ENCODE measurements at regions of chr21 and their contacts with region 1.

Region 1: GRCh38 chr21:17512253-17513213 is at the start of gene CXADR:
- DNase-seq: peak; percentile 89
- ATAC-seq: peak; percentile 88
- H3K4me3 ChIP-seq: peak within 1 kb of the TSS; percentile 85 to 96 (median 92)
- H3K27ac ChIP-seq: peak within 1 kb of the TSS; percentile 90
- H3K4me1 ChIP-seq: peaks cover 52% of the 10 kb centered on the region
- H3K27me3 ChIP-seq: no peaks in the 10 kb centered on the region; a peak in 1 of 5 replicates
- CTCF ChIP-seq: peak; percentile 81
- EP300 ChIP-seq: peak in 1 of 2 experiments; percentile 29; a peak in 1 of 4 replicates
- POLR2A ChIP-seq: peak; percentile 91 to 96
- RAD21 ChIP-seq: peak; percentile 78
- total RNA-seq, gene CXADR: 57.0 and 86.8 TPM in 2 replicates

Region 2: GRCh38 chr21:17343055-17343454 is 169.5 kb before region 1 on chr21:
- CTCF ChIA-PET with region 1: no interaction called
- POLR2A ChIA-PET with region 1: no interaction called
- in situ Hi-C with region 1: no loop called
- intact Hi-C with region 1: no loop called
- DNase-seq: peak; percentile 32
- ATAC-seq: no peak
- H3K4me3 ChIP-seq: no peak overlapping the region
- H3K27ac ChIP-seq: no peak overlapping the region
- H3K4me1 ChIP-seq: peaks cover 5% of the 10 kb centered on the region; the same call in 1 of the 2 replicates
- H3K27me3 ChIP-seq: no peaks in the 10 kb centered on the region; a peak in 1 of 5 replicates
- CTCF ChIP-seq: no peak
- EP300 ChIP-seq: no peak
- POLR2A ChIP-seq: no peak
- RAD21 ChIP-seq: no peak

Region 3: GRCh38 chr21:17387030-17387617 is 125.4 kb before region 1 on chr21:
- CTCF ChIA-PET with region 1: no interaction called
- POLR2A ChIA-PET with region 1: no interaction called
- in situ Hi-C with region 1: no loop called
- intact Hi-C with region 1: loop called (anchors 1 kb)
- DNase-seq: peak; percentile 75
- ATAC-seq: peak; percentile 74
- H3K4me3 ChIP-seq: no peak overlapping the region
- H3K27ac ChIP-seq: no peak overlapping the region
- H3K4me1 ChIP-seq: 0 out of 2 replicates have a peak, but pooled peaks cover 12% of the 10 kb centered on the region
- H3K27me3 ChIP-seq: no peaks in the 10 kb centered on the region
- CTCF ChIP-seq: peak; percentile 74
- EP300 ChIP-seq: no peak
- POLR2A ChIP-seq: no peak
- RAD21 ChIP-seq: peak; percentile 84

Region 4: GRCh38 chr21:17461014-17461413 is 51.5 kb before region 1 on chr21:
- CTCF ChIA-PET with region 1: no interaction called
- POLR2A ChIA-PET with region 1: interaction called, 18 read pairs
- in situ Hi-C with region 1: no loop called
- intact Hi-C with region 1: loop called (anchors 1 kb)
- DNase-seq: no peak
- ATAC-seq: no peak
- H3K4me3 ChIP-seq: no peak overlapping the region
- H3K27ac ChIP-seq: peak overlapping the region; percentile 80
- H3K4me1 ChIP-seq: peaks cover 45% of the 10 kb centered on the region
- H3K27me3 ChIP-seq: no peaks in the 10 kb centered on the region
- CTCF ChIP-seq: no peak
- EP300 ChIP-seq: no peak
- POLR2A ChIP-seq: no peak
- RAD21 ChIP-seq: no peak

Region 5: DNA sequence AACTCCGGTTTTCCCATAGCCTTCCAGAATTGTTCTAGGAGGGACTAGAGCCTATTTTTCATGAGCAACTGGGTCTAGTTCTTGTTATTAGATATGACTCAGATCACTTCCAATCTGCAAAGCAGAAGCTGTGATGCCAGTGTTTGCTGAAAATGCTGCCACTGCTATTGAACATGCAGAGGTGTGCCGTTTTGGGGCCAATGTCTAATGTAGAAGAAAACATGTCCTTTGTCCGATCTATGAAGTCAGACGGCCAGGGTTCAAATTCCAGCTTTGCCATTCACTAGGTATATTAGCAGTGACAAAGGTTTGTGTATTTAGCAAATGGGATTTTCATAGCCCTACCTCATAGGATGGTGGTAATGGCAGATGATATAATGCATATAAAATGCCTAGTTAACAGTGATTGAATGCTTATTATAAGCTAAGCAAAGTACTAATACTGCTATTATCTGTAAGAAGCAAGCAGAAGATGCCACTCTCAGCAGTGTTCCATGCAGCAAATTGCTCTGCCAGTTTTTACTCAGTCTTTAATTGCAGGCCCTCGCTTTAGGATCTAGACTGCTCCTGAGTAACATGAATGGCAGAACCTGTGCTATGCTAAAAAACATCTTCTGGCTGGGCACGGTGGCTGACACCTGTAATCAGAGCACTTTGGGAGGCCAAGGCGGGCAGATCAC is 39.8 kb before region 1 on chr21:
- CTCF ChIA-PET with region 1: no interaction called
- POLR2A ChIA-PET with region 1: interaction called, 20 read pairs
- in situ Hi-C with region 1: no loop called
- intact Hi-C with region 1: loop called (anchors 1 kb)
- DNase-seq: peak; percentile 99
- ATAC-seq: peak; percentile 92
- H3K4me3 ChIP-seq: peak overlapping the region in 1 of 3 experiments; percentile 37; a peak in 1 of 6 replicates
- H3K27ac ChIP-seq: peak overlapping the region; percentile 94
- H3K4me1 ChIP-seq: peaks cover 85% of the 10 kb centered on the region
- H3K27me3 ChIP-seq: no peaks in the 10 kb centered on the region
- CTCF ChIP-seq: no peak
- EP300 ChIP-seq: peak; percentile 88 to 94
- POLR2A ChIP-seq: no peak
- RAD21 ChIP-seq: no peak

Region 6: GRCh38 chr21:17527240-17527639 is 14.7 kb after region 1 on chr21:
- CTCF ChIA-PET with region 1: no interaction called
- POLR2A ChIA-PET with region 1: interaction called, 59 read pairs
- in situ Hi-C with region 1: no loop called
- intact Hi-C with region 1: loop called (anchors 1 kb)
- DNase-seq: peak; percentile 83
- ATAC-seq: peak; percentile 36
- H3K4me3 ChIP-seq: no peak overlapping the region
- H3K27ac ChIP-seq: peak overlapping the region; percentile 58
- H3K4me1 ChIP-seq: peaks cover 98% of the 10 kb centered on the region
- H3K27me3 ChIP-seq: no peaks in the 10 kb centered on the region
- CTCF ChIP-seq: no peak
- EP300 ChIP-seq: peak in 1 of 2 experiments; percentile 69; a peak in 2 of 4 replicates
- POLR2A ChIP-seq: no peak
- RAD21 ChIP-seq: no peak

Region 7: DNA sequence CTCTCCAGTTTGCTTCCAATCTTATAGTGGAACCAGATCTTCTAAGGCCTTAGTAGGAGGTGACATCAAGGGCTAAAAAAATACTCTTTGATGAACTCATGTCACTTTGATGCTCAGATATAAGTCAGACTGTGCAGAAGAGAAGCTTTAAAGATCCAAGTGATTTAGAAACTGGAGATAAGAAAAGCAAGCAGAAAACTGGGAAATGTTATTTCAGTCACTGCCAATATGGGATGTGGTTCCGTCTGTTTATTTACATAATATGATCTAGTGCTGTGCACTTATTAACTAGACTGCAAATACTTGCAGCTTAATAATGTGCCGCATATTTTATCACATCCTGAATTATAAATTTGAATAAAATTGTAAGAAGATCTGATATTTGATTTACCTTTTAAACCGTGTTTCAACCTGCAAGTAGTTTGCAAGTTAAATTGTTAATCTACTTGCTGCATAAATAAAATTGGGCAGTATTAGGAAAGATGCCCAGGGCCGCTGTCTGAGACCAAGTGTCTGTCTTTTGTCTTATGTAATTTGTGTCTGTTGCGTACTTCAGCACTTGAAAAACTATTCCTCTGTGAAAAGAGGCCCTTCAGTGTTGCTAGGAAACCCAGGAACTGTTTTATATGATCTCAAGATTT is 30.0 kb after region 1 on chr21:
- CTCF ChIA-PET with region 1: no interaction called
- POLR2A ChIA-PET with region 1: interaction called, 18 read pairs
- in situ Hi-C with region 1: no loop called
- intact Hi-C with region 1: no loop called
- DNase-seq: peak; percentile 94
- ATAC-seq: peak; percentile 91
- H3K4me3 ChIP-seq: no peak overlapping the region; a peak in 1 of 6 replicates
- H3K27ac ChIP-seq: peak overlapping the region; percentile 58
- H3K4me1 ChIP-seq: peaks cover 92% of the 10 kb centered on the region
- H3K27me3 ChIP-seq: no peaks in the 10 kb centered on the region
- CTCF ChIP-seq: no peak
- EP300 ChIP-seq: peak in 1 of 2 experiments; percentile 97; a peak in 2 of 4 replicates
- POLR2A ChIP-seq: no peak
- RAD21 ChIP-seq: no peak

Region 8: DNA sequence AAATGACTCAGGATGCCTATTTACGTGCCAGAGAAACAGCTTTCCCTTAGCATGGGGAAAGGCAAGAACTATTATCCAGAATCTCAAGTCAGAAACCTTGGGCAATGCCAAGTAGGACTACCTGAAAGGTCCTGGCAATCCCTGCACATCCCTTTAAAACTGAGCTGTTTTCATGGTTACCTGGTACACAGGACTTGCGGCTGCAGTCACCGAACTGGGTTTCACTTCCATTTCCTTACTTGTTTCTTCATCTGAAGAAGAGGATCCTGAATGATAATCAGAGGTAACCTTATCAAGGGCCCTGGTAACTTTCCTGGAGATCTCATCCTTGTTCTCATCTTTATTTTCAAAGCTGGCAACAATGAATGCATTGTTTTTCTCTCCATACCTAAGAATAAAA is 85.9 kb after region 1 on chr21:
- CTCF ChIA-PET with region 1: no interaction called
- POLR2A ChIA-PET with region 1: no interaction called
- in situ Hi-C with region 1: no loop called
- intact Hi-C with region 1: no loop called
- DNase-seq: no peak
- ATAC-seq: no peak
- H3K4me3 ChIP-seq: no peak overlapping the region
- H3K27ac ChIP-seq: no peak overlapping the region
- H3K4me1 ChIP-seq: no peaks in the 10 kb centered on the region
- H3K27me3 ChIP-seq: no peaks in the 10 kb centered on the region
- CTCF ChIP-seq: no peak
- EP300 ChIP-seq: no peak
- POLR2A ChIP-seq: no peak
- RAD21 ChIP-seq: no peak

Measured in HepG2 (cell line).